ENCODE measurements at regions of chr7 and their contacts with region 1.

Region 1: DNA sequence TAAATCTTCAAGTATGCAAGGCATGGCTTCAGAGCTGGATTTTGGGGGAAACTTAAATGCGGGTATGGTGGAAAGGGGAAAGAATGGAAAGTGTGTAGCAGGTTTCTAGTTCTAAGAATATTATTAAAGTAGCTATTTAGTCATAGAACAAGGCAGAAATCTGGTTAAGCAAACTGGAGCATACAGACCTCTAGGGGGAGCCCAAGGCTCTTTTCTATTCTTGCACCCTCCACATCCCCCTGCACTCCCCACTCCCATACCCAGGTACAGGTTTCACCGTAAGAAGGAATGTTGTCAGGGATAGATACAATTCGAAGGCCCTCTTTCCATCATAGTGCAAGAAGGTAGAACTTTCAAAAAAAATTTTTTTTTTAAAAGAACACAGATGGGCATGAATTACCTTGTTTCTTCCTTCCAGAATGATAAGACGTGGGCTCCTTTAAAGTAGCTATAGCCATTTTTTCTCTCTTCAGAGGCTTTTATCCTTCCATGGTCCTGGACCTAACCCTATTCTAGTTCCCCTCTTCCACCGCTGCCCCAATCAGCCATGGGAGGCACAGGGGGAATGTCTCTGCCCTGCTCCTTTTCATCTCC is 41.5 kb upstream of the SMIM30 start:
- DNase-seq: peak; percentile 27
- ATAC-seq: no peak
- H3K4me3 Mint-ChIP-seq: no peak overlapping the region
- H3K27ac Mint-ChIP-seq: no peak overlapping the region
- H3K4me1 Mint-ChIP-seq: no peaks in the 10 kb centered on the region
- H3K27me3 Mint-ChIP-seq: peaks cover 9% of the 10 kb centered on the region

Region 2: GRCh38 chr7:113710310-113711106 is 550.7 kb after region 1 on chr7:
- CTCF ChIA-PET with region 1: no interaction called
- POLR2A ChIA-PET with region 1: no interaction called
- intact Hi-C with region 1: loop called in 1 of 2 experiments (anchors 1 kb)
- DNase-seq: peak; percentile 45
- ATAC-seq: peak; percentile 47
- H3K4me3 Mint-ChIP-seq: no peak overlapping the region
- H3K27ac Mint-ChIP-seq: no peak overlapping the region
- H3K4me1 Mint-ChIP-seq: no peaks in the 10 kb centered on the region
- H3K27me3 Mint-ChIP-seq: peaks cover 8% of the 10 kb centered on the region